Activated CD4-positive, alpha-beta T cell treated with anti-CD3 and anti-CD28 coated beads for 36 hours (primary cell): ENCODE measurements at regions of chr15 and their contacts with region 1.

Region 1: GRCh38 chr15:38690689-38691332 is 126.2 kb upstream of the RASGRP1 start:
- DNase-seq: peak; percentile 89
- ATAC-seq: peak; percentile 16
- H3K4me3 Mint-ChIP-seq: no peak overlapping the region
- H3K27ac Mint-ChIP-seq: peak overlapping the region; percentile 42
- H3K4me1 Mint-ChIP-seq: peaks cover 78% of the 10 kb centered on the region
- H3K27me3 Mint-ChIP-seq: no peaks in the 10 kb centered on the region

Region 2: DNA sequence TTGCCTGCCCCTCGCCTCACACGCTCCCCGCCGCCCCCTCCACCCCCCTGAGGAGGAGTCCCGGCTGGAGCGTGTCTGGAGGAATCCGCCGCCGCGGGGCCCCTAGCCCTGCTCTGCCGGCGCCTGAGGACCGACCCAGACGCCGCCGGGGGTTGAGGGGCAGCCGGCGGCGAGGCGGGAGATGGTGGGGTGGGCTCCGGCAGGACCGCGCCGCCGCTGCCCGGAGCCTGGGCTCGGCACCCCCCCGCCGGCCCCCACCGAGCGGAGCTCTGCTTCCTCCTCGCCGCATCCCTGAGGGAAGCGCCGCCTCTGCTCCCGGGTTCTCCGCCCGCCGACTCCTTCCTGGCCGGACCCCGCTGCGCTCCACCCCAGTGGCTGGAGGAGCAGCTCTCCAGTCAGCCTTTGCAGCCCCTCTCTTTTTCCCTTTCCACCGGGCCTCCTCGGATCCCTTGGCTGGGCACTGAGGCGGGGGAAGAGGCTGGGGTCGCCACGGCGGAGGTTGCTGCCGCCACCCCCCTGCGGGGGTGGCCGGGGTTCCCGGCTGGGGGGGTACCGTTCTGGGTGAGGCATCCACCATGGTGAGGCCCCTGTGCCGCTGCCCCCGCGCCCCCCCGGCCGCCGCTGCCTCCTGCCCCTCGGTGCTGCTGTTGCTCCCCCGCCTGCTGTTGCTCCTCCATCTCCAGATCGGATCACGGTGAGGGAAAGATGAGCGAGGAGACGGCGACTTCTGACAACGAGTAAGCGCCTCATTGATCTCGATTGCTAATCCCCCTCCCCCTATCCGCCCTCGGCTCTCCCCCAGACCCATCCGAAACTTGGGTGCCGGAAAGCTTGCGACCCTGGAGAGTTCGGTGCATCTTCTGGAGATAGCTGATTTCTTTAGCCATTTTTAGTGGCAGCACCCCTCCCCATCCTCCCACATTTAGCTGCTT is 438.1 kb before region 1 on chr15 and contains the start of gene SPRED1:
- CTCF ChIA-PET with region 1: no interaction called
- POLR2A ChIA-PET with region 1: no interaction called
- intact Hi-C with region 1: loop called (anchors 2 to 10 kb)
- DNase-seq: peak; percentile 49
- ATAC-seq: peak; percentile 11
- H3K4me3 Mint-ChIP-seq: peak within 1 kb of the TSS; percentile 85
- H3K27ac Mint-ChIP-seq: peak within 1 kb of the TSS; percentile 69
- H3K4me1 Mint-ChIP-seq: peaks cover 25% of the 10 kb centered on the region
- H3K27me3 Mint-ChIP-seq: peaks cover 29% of the 10 kb centered on the region
- total RNA-seq, gene SPRED1: 0.90 to 0.96 TPM

Region 3: DNA sequence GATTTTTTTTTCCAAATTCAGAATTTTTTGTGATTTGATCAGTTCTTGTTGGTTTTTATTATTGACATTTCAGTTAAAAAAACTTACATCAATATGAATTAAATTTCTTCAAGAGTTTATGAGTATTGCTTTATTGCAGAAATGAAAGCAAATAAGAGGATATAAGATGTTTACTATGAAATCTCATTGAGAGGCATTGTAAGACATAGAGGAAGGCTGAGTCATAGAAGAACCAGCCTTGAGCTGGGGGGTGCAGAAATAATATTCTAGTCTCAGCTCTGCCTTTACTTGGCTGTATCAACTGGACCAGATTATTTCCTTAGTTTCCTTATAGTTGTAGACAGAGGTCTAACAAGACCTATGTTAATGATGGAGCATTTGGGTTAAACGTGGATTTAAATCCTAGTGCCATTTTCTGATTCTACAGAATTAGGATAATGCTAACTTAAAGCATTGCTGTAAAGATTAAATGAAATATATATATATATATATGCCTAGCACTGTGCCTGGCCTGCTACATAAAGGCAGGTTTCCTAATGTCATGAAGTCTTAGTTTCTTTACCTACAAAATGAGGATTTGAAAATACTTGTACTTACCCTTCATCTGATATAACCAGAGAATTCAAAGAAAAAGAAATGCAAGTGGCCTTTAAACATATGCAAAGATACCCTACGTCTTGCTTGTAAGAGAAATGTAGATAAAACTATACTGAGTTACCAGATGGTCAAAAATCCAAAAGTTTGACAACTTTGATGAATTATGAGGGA is 229.6 kb before region 1 on chr15:
- CTCF ChIA-PET with region 1: interaction called, 15 read pairs
- POLR2A ChIA-PET with region 1: no interaction called
- intact Hi-C with region 1: no loop called
- DNase-seq: no peak
- ATAC-seq: peak; percentile 76
- H3K4me3 Mint-ChIP-seq: no peak overlapping the region
- H3K27ac Mint-ChIP-seq: no peak overlapping the region
- H3K4me1 Mint-ChIP-seq: peaks cover 47% of the 10 kb centered on the region
- H3K27me3 Mint-ChIP-seq: no peaks in the 10 kb centered on the region

Region 4: GRCh38 chr15:38496151-38496550 is 194.7 kb before region 1 on chr15:
- CTCF ChIA-PET with region 1: interaction called, 27 read pairs
- POLR2A ChIA-PET with region 1: no interaction called
- intact Hi-C with region 1: no loop called
- DNase-seq: no peak
- ATAC-seq: no peak
- H3K4me3 Mint-ChIP-seq: no peak overlapping the region
- H3K27ac Mint-ChIP-seq: peak overlapping the region; percentile 77
- H3K4me1 Mint-ChIP-seq: peaks cover 34% of the 10 kb centered on the region
- H3K27me3 Mint-ChIP-seq: no peaks in the 10 kb centered on the region

Region 5: DNA sequence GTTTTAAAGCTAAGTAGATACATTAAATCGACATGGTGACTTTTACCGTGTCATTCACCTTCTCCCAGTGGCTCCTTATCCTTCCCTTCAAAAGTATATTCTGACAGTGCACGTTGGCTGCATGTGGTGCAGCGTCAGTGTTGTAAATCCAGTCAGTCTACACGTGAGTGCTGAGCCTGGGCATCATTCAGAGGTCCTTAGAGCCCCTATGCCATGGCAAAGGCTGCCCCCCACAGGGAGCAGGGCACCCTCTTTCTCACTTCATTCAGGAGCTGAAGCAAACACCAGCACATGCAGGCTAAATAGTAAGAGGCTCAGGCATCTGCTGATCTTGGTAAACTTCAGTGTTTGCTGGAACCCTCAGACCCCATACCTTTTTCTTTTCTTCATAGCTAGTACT is 169.5 kb before region 1 on chr15:
- CTCF ChIA-PET with region 1: interaction called, 19 read pairs
- POLR2A ChIA-PET with region 1: interaction called, 9 read pairs
- intact Hi-C with region 1: no loop called
- DNase-seq: no peak
- ATAC-seq: peak; percentile 20
- H3K4me3 Mint-ChIP-seq: no peak overlapping the region
- H3K27ac Mint-ChIP-seq: peak overlapping the region; percentile 76
- H3K4me1 Mint-ChIP-seq: peaks cover 73% of the 10 kb centered on the region
- H3K27me3 Mint-ChIP-seq: no peaks in the 10 kb centered on the region

Region 6: GRCh38 chr15:38563723-38564519 is 126.9 kb before region 1 on chr15:
- CTCF ChIA-PET with region 1: interaction called, 339 read pairs
- POLR2A ChIA-PET with region 1: interaction called, 19 read pairs
- intact Hi-C with region 1: loop called (anchors 1 kb)
- DNase-seq: peak; percentile 93
- ATAC-seq: peak; percentile 55
- H3K4me3 Mint-ChIP-seq: peak overlapping the region; percentile 93
- H3K27ac Mint-ChIP-seq: peak overlapping the region; percentile 98
- H3K4me1 Mint-ChIP-seq: peaks cover 54% of the 10 kb centered on the region
- H3K27me3 Mint-ChIP-seq: no peaks in the 10 kb centered on the region

Region 7: DNA sequence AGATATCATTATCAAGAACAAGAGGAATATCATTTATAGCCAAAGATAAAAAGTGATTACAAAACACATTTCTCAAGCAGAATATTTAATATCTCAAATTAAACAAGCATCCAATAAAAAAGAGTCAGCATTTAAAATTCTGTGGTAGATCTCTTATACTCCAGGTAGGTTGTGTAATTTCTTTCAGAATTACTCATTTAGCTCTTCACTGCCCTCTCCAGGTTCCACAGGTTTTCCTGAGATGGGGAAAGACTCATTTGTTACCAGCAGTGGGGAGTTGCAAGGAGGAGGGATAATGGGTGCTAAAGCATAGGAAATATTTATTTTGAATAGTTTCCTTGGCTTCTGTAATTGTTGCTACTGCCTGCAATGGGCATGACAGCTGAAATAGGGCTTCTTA is 43.1 kb before region 1 on chr15:
- CTCF ChIA-PET with region 1: interaction called, 44 read pairs
- POLR2A ChIA-PET with region 1: no interaction called
- intact Hi-C with region 1: no loop called
- DNase-seq: no peak
- ATAC-seq: no peak
- H3K4me3 Mint-ChIP-seq: no peak overlapping the region
- H3K27ac Mint-ChIP-seq: peak overlapping the region; percentile 34
- H3K4me1 Mint-ChIP-seq: peaks cover 75% of the 10 kb centered on the region
- H3K27me3 Mint-ChIP-seq: no peaks in the 10 kb centered on the region